HCT116 (cell line): ENCODE measurements at regions of chr6 and their contacts with region 1.

Region 1: DNA sequence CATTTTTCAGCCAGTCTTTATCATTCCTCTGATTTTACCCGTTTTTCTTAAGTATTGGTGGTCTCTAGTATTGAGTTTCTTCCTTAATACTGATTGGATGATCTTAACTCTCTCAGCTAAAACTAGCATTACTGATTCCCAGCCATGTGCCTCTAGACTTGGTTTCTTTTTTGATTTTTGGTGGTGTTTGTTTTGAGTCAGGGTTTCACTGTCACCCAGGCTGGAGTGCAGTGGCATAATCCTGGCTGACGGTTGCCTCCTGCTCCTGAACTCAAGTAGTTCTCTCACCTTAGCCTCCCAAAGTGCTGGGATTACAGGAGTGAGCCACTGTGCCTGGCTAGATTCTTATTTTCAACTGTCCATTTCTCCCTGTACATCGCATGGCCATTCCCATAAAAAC is 24.9 kb downstream of the DPPA5 start:
- DNase-seq: no peak
- ATAC-seq: no peak
- H3K4me3 ChIP-seq: no peak overlapping the region
- H3K27ac ChIP-seq: no peak overlapping the region
- H3K4me1 ChIP-seq: peaks cover 0 to 5% of the 10 kb centered on the region in 2 experiments; a peak in 1 of 4 replicates
- H3K27me3 ChIP-seq: no peaks in the 10 kb centered on the region
- CTCF ChIP-seq: no peak
- POLR2A ChIP-seq: no peak
- RAD21 ChIP-seq: no peak

Region 2: DNA sequence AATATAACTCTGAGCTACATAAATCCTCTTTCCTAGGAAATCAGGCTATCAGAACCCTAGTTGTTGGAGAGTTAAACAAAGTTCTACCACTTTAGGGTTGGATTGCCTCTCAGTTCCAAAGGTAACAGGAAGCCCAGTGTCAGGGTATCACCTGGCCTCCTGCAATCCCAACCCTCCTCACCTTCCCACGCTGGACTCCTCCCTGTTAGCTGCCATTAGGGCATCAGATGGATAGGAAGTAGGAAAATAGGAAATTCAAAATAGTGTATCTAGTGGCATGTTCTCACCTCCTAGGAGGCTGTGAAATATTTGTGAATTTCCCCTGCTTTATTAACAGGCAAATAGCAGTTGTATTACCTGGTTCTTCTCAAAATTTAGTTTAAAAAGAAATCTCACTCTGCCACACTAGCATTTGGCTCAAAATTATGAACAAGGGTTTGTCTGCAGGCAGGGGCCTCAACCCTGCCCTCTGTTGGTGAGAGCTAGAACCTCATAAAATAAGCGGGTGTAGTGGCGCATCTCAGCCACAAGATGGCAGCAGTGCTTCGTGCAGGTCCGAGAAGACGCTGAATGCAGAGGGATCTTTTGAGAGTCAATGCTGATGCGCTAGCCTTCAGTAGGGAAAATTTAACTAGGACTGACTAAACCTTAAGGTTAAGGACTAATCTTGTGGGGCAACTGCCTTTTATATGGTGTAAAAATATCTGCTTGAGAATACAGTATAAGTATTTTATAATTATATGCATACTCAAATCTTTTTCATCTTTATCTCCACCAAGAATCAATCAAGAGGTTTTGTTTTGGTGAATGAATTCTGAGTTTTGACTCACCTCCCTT is 917.1 kb before region 1 on chr6:
- CTCF ChIA-PET with region 1: interaction called, 5 read pairs
- POLR2A ChIA-PET with region 1: no interaction called
- RAD21 ChIA-PET with region 1: no interaction called
- intact Hi-C with region 1: loop called (anchors 1 kb)
- DNase-seq: peak; percentile 54
- ATAC-seq: peak; percentile 87
- H3K4me3 ChIP-seq: no peak overlapping the region
- H3K27ac ChIP-seq: no peak overlapping the region
- H3K4me1 ChIP-seq: no peaks in the 10 kb centered on the region
- H3K27me3 ChIP-seq: peaks cover 26% of the 10 kb centered on the region
- CTCF ChIP-seq: peak; percentile 99 to 100 (median 100)
- POLR2A ChIP-seq: no peak
- RAD21 ChIP-seq: peak; percentile 96

Region 3: DNA sequence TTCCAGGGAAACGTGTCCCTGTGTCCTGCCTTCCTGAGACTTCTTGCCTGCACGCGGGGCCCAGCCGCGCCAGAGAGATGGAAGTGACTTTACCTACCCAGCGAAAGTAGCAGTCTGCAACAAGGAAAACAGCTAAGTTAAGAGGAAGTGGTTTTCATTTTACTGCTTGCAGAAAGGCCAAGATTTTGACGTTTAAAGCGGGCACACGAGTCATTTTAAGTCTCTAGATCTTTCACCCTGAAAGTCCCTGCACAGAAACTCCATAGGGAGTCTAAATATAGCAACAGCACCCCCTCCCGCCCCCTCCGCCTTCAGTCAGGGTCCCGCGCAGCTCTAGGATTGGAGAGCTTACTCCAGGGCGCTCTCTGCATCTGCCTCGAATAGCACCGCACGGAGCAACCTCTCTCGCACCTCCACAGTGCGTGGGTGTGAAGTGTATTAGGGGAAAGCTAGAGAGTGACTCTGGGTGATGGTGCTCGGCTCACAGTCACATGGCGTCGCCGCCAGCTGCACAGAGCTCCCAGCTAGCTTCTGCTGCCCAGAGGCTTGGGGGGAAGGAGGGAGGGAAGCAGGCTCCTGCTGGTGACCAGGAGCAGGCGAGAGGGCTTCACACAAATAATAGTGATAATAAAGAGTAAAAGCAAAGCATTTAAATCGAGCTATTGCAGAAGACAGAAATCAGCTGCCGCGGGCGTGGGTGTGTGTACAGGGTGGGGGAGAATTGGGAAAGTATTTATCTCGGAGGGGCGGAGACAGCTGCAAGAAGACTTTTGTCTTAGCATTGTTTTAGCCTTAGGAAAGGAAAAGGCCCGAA is 709.1 kb before region 1 on chr6:
- CTCF ChIA-PET with region 1: interaction called, 18 read pairs
- POLR2A ChIA-PET with region 1: no interaction called
- RAD21 ChIA-PET with region 1: no interaction called
- intact Hi-C with region 1: loop called (anchors 5 kb)
- DNase-seq: no peak
- ATAC-seq: no peak
- H3K4me3 ChIP-seq: no peak overlapping the region
- H3K27ac ChIP-seq: no peak overlapping the region
- H3K4me1 ChIP-seq: no peaks in the 10 kb centered on the region
- H3K27me3 ChIP-seq: peaks cover 11% of the 10 kb centered on the region; the same call in 1 of the 2 replicates
- CTCF ChIP-seq: no peak
- POLR2A ChIP-seq: no peak
- RAD21 ChIP-seq: no peak

Region 4: GRCh38 chr6:73017476-73017875 is 311.7 kb before region 1 on chr6:
- CTCF ChIA-PET with region 1: no interaction called
- POLR2A ChIA-PET with region 1: no interaction called
- RAD21 ChIA-PET with region 1: no interaction called
- intact Hi-C with region 1: no loop called
- DNase-seq: no peak
- ATAC-seq: no peak
- H3K4me3 ChIP-seq: no peak overlapping the region
- H3K27ac ChIP-seq: no peak overlapping the region
- H3K4me1 ChIP-seq: no peaks in the 10 kb centered on the region
- H3K27me3 ChIP-seq: peaks cover 48% of the 10 kb centered on the region
- CTCF ChIP-seq: no peak
- POLR2A ChIP-seq: no peak
- RAD21 ChIP-seq: no peak

Region 5: GRCh38 chr6:73129653-73130443 is 199.4 kb before region 1 on chr6:
- CTCF ChIA-PET with region 1: interaction called, 6 read pairs
- POLR2A ChIA-PET with region 1: interaction called, 3 read pairs
- RAD21 ChIA-PET with region 1: interaction called in 1 of 2 experiments, 3 read pairs
- intact Hi-C with region 1: loop called (anchors 2 kb)
- DNase-seq: peak; percentile 66
- ATAC-seq: peak; percentile 91
- H3K4me3 ChIP-seq: no peak overlapping the region
- H3K27ac ChIP-seq: no peak overlapping the region
- H3K4me1 ChIP-seq: peaks cover 0 to 11% of the 10 kb centered on the region in 2 experiments; a peak in 1 of 4 replicates
- H3K27me3 ChIP-seq: peaks cover 25% of the 10 kb centered on the region
- CTCF ChIP-seq: peak; percentile 88 to 99 (median 99)
- POLR2A ChIP-seq: no peak
- RAD21 ChIP-seq: peak; percentile 93

Region 6: DNA sequence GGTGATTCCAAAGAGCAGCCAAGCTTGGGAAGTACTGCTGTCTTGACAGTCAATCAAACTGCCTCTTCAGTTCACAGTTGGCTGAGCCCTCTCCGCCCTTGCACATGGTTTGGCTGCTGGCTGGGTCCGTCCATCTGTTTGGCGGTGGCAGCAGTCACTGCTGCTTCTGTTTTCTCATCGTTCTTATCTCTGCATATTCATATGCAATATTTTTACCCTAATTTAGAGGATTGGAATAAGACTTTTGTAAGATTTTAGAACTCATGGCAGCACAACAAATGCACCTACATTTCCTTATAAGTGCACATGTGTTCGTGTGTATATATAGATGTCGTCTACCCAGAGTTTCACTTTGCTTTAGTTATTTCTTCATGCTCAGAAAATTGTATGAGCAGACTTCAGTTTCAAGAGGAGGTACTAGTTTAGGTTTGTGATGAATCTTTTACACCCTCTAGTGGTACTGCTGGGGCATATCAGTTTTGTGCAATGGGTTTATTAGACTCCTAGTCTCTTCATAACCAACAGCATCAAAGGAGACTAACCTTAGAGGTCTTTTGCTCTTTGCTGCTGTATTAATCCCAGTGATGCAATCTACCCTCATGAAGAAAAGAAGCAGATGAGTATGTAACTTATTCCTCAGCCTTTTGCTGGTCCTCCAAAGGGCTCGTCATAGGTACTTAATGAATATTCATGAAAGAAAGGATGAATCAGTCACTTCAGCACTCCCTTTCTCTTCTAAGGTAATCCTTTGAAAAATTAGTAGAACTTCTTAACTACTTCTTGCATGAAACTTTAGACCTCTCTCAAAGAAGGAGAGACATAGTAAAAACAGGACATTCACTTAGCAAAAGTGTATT is 148.2 kb before region 1 on chr6:
- CTCF ChIA-PET with region 1: no interaction called
- POLR2A ChIA-PET with region 1: no interaction called
- RAD21 ChIA-PET with region 1: no interaction called
- intact Hi-C with region 1: loop called (anchors 5 kb)
- DNase-seq: peak; percentile 39
- ATAC-seq: peak; percentile 95
- H3K4me3 ChIP-seq: no peak overlapping the region
- H3K27ac ChIP-seq: no peak overlapping the region
- H3K4me1 ChIP-seq: no peaks in the 10 kb centered on the region
- H3K27me3 ChIP-seq: peaks cover 82% of the 10 kb centered on the region
- CTCF ChIP-seq: peak; percentile 63 to 88 (median 79)
- POLR2A ChIP-seq: no peak
- RAD21 ChIP-seq: peak; percentile 79

Region 7: GRCh38 chr6:73285674-73286283 is 43.4 kb before region 1 on chr6:
- CTCF ChIA-PET with region 1: interaction called, 25 read pairs
- POLR2A ChIA-PET with region 1: no interaction called
- RAD21 ChIA-PET with region 1: interaction called in 1 of 2 experiments, 4 read pairs
- intact Hi-C with region 1: loop called (anchors 1 kb)
- DNase-seq: peak; percentile 23
- ATAC-seq: peak; percentile 84
- H3K4me3 ChIP-seq: no peak overlapping the region
- H3K27ac ChIP-seq: no peak overlapping the region
- H3K4me1 ChIP-seq: peaks cover 0 to 6% of the 10 kb centered on the region in 2 experiments; a peak in 1 of 4 replicates
- H3K27me3 ChIP-seq: no peaks in the 10 kb centered on the region
- CTCF ChIP-seq: peak; percentile 41 to 56 (median 46); a peak in 5 of 6 replicates
- POLR2A ChIP-seq: no peak
- RAD21 ChIP-seq: peak; percentile 58

Region 8: DNA sequence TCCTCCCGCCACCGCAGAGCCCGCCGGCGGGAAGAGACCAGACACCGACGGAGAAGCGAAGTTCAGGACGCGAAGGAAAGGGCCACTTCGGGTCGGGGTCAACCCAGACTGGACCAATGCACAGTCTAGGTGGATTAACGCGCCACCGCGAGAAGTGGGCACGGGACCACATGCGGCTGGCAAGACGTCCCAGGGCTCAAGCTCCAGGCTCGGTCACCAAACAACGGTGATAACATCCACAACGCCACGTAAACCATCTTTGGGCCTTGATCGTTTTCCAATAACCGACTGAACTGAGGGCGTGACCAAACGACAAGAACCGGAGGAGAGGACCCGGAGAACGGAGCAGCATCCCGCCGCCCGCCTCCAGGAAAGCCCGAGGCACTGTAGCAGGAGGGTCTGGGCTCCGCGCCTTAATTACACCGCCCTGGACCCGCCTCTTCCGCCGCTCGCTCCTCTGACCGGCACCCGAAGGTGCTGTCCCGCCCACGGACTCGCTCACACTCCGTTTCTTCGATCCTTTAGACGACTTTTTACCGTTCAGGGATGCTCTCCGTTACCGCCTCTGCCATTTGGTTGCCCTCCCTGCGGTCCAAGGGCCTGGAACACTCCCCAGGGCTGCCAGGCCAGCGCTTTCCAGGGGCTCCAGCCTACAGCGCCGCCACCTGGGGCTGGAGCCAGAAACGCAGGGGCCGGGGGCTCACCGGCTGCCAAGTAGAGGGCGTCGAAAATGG is 19.3 kb before region 1 on chr6:
- CTCF ChIA-PET with region 1: interaction called, 13 read pairs
- POLR2A ChIA-PET with region 1: no interaction called
- RAD21 ChIA-PET with region 1: no interaction called
- intact Hi-C with region 1: no loop called
- DNase-seq: peak; percentile 54
- ATAC-seq: peak; percentile 93
- H3K4me3 ChIP-seq: peak overlapping the region; percentile 71 to 86
- H3K27ac ChIP-seq: peak overlapping the region; percentile 86
- H3K4me1 ChIP-seq: peaks cover 2 to 15% of the 10 kb centered on the region in 2 experiments; a peak in 1 of 4 replicates
- H3K27me3 ChIP-seq: no peaks in the 10 kb centered on the region
- CTCF ChIP-seq: peak; percentile 54 to 79 (median 64); a peak in 5 of 6 replicates
- POLR2A ChIP-seq: peak; percentile 86
- RAD21 ChIP-seq: peak; percentile 39

Region 9: DNA sequence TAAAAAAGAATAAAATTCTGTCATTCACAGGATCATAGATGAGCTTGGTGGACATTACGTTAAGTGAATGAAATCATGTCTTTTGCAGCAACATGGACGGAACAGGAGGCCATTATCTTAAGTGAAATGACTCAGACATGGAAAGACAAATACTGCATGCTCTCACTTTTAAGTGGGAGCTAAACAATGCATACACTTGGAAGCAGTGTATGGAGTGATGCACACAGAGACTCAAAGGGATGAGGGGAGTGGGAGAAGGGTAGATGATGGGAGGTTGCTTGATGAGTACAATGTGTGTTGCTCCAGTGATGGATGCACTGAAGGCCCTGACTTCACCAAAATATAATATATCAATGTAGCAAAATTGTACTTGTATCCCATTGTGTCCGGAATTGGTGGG is 660.2 kb after region 1 on chr6:
- CTCF ChIA-PET with region 1: no interaction called
- POLR2A ChIA-PET with region 1: no interaction called
- RAD21 ChIA-PET with region 1: no interaction called
- intact Hi-C with region 1: no loop called
- DNase-seq: no peak
- ATAC-seq: no peak
- H3K4me3 ChIP-seq: no peak overlapping the region
- H3K27ac ChIP-seq: no peak overlapping the region
- H3K4me1 ChIP-seq: no peaks in the 10 kb centered on the region
- H3K27me3 ChIP-seq: no peaks in the 10 kb centered on the region
- CTCF ChIP-seq: no peak
- POLR2A ChIP-seq: no peak
- RAD21 ChIP-seq: no peak